Activated CD4-positive, alpha-beta T cell treated with anti-CD3 and anti-CD28 coated beads for 36 hours (primary cell): ENCODE measurements at regions of chr6 and their contacts with region 1.

Region 1: DNA sequence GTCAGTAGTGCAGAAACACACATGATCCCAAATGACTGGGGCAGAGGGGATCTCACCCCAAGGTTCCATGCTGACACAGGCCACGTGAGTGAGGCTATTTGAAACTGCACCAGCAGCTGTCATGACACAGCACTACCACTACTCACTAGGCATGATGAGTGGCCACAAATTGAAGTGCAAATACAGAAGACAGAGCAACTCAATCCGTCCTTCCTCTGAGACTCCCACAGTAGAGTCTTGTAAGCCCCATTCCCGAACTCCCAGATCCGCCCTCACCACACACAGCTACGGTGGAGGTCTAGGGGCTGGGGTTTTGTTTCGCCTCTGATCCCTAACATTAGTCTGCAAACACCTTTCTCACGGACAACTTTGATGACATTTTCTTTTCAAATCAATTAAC is 113.3 kb upstream of the NUP153 start:
- DNase-seq: no peak
- ATAC-seq: no peak
- H3K4me3 Mint-ChIP-seq: no peak overlapping the region
- H3K27ac Mint-ChIP-seq: no peak overlapping the region
- H3K4me1 Mint-ChIP-seq: no peaks in the 10 kb centered on the region
- H3K27me3 Mint-ChIP-seq: peaks cover 3% of the 10 kb centered on the region

Region 2: GRCh38 chr6:17469006-17469832 is 350.8 kb before region 1 on chr6:
- CTCF ChIA-PET with region 1: no interaction called
- POLR2A ChIA-PET with region 1: no interaction called
- intact Hi-C with region 1: no loop called
- DNase-seq: no peak
- ATAC-seq: no peak
- H3K4me3 Mint-ChIP-seq: no peak overlapping the region
- H3K27ac Mint-ChIP-seq: no peak overlapping the region
- H3K4me1 Mint-ChIP-seq: peaks cover 5% of the 10 kb centered on the region
- H3K27me3 Mint-ChIP-seq: peaks cover 3% of the 10 kb centered on the region

Region 3: GRCh38 chr6:17505062-17505476 is 315.0 kb before region 1 on chr6:
- CTCF ChIA-PET with region 1: interaction called, 3 read pairs
- POLR2A ChIA-PET with region 1: no interaction called
- intact Hi-C with region 1: loop called in 1 of 2 experiments (anchors 10 kb)
- DNase-seq: no peak
- ATAC-seq: no peak
- H3K4me3 Mint-ChIP-seq: no peak overlapping the region
- H3K27ac Mint-ChIP-seq: no peak overlapping the region
- H3K4me1 Mint-ChIP-seq: no peaks in the 10 kb centered on the region
- H3K27me3 Mint-ChIP-seq: peaks cover 5% of the 10 kb centered on the region

Region 4: DNA sequence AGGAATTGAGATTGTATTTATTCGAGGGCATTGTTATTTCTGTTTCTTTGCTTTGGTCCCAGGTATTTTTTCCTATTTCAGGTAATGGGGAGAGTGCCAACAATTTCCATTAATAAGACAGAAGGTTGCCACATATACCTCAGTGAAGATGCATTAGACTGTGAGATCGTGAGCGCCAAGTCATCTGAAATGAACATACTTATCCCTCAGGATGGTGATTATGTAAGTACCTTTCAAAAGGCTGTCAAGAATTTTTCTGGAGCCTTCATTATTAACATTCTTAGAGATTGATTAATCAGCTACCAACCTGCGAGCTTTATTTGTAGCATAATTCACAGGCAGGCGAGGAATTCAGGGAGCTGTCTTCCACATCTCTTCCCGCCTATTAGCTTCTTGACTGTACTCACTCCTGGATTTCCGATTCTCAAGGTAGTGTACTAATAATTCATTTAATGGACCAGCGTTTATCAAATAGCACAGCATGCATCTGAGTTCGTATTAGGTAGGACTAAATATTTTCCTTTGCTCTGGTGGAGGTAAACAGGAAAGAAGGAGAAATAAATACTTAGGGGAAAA is 268.6 kb before region 1 on chr6:
- CTCF ChIA-PET with region 1: no interaction called
- POLR2A ChIA-PET with region 1: no interaction called
- intact Hi-C with region 1: no loop called
- DNase-seq: no peak
- ATAC-seq: no peak
- H3K4me3 Mint-ChIP-seq: no peak overlapping the region
- H3K27ac Mint-ChIP-seq: no peak overlapping the region
- H3K4me1 Mint-ChIP-seq: no peaks in the 10 kb centered on the region
- H3K27me3 Mint-ChIP-seq: peaks cover 7% of the 10 kb centered on the region